ENCODE measurements at regions of chr6 and their contacts with region 1.

Region 1: GRCh38 chr6:159654483-159655098 is 38.5 kb downstream of the SOD2 start:
- DNase-seq: no peak
- H3K4me3 ChIP-seq: no peak overlapping the region
- H3K27ac ChIP-seq: no peak overlapping the region
- H3K4me1 ChIP-seq: no peaks in the 10 kb centered on the region
- H3K27me3 ChIP-seq: no peaks in the 10 kb centered on the region
- CTCF ChIP-seq: peak; percentile 56 to 72 (median 56)
- EP300 ChIP-seq: no peak
- POLR2A ChIP-seq: no peak

Region 2: DNA sequence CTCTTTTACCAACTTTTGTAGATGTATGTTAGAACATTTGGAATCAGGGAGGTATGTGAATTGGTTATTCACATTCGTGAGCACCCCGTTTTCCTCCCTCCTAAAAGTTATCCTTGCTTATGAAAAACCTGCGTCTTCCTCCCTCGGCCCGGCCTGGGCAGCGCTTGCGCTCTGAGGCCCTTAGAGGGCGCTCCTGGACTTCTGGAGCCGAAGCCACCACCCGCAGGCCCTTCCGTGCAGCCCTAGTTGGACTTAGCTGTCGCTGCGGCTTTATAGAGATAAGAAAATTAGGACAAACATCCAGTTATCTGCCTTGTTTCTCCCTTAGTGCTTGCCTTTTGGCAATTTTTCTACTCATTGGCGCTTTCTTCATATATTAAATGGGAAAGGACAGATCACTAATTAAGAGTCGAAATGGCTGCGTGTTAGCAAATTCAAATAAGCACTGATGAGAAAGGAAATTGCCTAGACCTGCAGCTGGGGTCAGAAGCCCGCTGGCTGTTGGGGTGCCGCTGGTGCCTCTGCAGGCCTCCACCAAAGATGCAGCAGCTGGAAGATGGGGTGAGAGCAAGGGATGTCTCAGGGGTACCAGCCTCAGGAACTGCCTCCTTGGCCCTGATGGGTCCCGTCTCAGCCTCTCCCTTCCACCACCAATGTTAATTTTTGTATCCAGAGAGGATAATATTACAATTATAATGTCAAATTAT is 480.2 kb before region 1 on chr6:
- intact Hi-C with region 1: loop called (anchors 2 kb)
- DNase-seq: peak; percentile 47
- H3K4me3 ChIP-seq: peak overlapping the region in 1 of 4 donors; percentile 7
- H3K27ac ChIP-seq: no peak overlapping the region
- H3K4me1 ChIP-seq: peaks cover 6 to 45% (median 32%) of the 10 kb centered on the region in 4 donors
- H3K27me3 ChIP-seq: peaks cover 0 to 47% (median 2%) of the 10 kb centered on the region in 4 donors
- CTCF ChIP-seq: peak; percentile 85 to 96 (median 90)
- EP300 ChIP-seq: no peak
- POLR2A ChIP-seq: no peak

Region 3: DNA sequence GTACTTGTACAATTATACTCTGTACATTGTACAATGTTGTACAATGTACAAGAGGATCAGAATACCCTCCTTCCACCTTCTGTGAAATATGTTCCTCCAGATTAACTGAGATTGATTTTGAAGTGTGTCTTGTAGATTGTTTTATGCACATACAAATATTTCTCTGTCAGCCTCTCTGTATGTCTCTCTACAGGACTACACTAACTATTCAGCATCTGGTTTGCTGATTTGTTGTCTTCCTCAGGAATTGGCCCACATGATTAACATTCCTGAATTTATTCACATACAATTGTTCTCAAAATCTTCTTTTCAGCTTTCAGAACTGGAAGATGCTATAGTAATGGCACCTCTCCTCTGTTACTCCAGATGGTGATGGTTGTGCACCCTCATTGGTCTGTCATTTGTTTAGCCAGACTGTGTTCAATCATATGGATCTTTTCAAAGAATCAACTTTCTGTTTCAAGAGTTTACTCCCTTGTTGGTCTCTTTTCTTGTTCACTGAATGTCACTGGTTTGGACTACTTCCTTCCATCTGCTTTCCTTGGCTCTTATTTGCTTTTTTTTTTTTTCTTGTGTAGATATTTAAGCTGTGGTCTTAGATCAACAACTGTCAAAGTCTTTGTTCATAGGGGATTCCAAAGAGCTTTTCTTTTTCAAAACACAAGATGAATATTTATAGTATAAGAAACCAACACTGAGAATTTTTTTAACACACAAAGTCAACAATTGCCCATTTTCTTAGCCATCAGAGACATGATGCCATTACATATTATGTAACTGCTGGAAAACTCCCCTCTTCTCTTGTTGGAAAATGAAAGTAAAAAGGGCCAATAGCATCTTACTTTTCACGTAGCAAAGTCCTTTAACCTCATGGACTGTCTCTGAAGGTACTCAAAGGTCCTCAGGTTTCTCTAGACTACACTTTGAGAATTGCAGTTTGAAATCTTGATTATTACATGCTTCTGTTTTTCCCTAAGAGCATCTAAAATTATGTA is 941.5 kb after region 1 on chr6:
- intact Hi-C with region 1: no loop called
- DNase-seq: no peak
- H3K4me3 ChIP-seq: no peak overlapping the region
- H3K27ac ChIP-seq: no peak overlapping the region
- H3K4me1 ChIP-seq: no peaks in the 10 kb centered on the region
- H3K27me3 ChIP-seq: no peaks in the 10 kb centered on the region
- CTCF ChIP-seq: no peak
- EP300 ChIP-seq: no peak
- POLR2A ChIP-seq: no peak